ENCODE measurements at regions of chr10 and their contacts with region 1.

Region 1: DNA sequence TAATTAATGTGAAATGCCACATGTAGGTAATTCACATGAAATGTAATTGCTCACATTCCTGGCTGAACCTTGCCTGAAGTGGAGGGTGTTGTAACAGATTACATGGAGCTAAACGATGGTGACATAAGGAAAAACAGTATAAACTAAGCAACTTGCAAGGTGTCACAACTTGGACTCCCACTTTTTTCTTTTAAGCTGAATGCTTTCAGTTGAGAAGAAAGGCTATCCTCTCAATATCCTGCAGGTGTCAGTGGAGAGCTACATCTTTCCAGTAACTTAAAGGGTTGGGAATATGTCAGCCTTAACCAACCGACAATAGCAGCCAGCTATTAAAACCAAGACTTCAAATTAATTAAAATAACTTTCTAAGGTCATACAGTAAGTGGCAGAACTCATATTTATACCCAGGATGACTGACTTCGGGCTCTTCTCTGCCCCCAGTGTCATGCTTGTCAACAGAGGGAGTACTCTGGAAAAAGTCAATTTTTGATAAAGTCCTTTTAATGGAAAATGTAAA is 33.7 kb downstream of the NRBF2 start:
- DNase-seq: peak; percentile 24
- H3K4me3 ChIP-seq: no peak overlapping the region
- H3K27me3 ChIP-seq: no peaks in the 10 kb centered on the region
- CTCF ChIP-seq: peak; percentile 76

Region 2: GRCh38 chr10:63331586-63331985 is 164.8 kb after region 1 on chr10:
- CTCF ChIA-PET with region 1: no interaction called
- POLR2A ChIA-PET with region 1: no interaction called
- DNase-seq: no peak
- H3K4me3 ChIP-seq: no peak overlapping the region
- H3K27me3 ChIP-seq: no peaks in the 10 kb centered on the region
- CTCF ChIP-seq: no peak

Region 3: GRCh38 chr10:63629363-63630084 is 462.7 kb after region 1 on chr10:
- CTCF ChIA-PET with region 1: interaction called, 49 read pairs
- POLR2A ChIA-PET with region 1: interaction called, 3 read pairs
- DNase-seq: peak; percentile 96
- H3K4me3 ChIP-seq: peak overlapping the region; percentile 62
- H3K27me3 ChIP-seq: no peaks in the 10 kb centered on the region
- CTCF ChIP-seq: peak; percentile 86

Region 4: GRCh38 chr10:63767138-63767801 is 600.5 kb after region 1 on chr10:
- CTCF ChIA-PET with region 1: interaction called, 14 read pairs
- POLR2A ChIA-PET with region 1: no interaction called
- DNase-seq: peak; percentile 66
- H3K4me3 ChIP-seq: no peak overlapping the region
- H3K27me3 ChIP-seq: no peaks in the 10 kb centered on the region; the same call in none of the 2 replicates
- CTCF ChIP-seq: peak; percentile 29; the same call in 1 of the 2 replicates

Region 5: DNA sequence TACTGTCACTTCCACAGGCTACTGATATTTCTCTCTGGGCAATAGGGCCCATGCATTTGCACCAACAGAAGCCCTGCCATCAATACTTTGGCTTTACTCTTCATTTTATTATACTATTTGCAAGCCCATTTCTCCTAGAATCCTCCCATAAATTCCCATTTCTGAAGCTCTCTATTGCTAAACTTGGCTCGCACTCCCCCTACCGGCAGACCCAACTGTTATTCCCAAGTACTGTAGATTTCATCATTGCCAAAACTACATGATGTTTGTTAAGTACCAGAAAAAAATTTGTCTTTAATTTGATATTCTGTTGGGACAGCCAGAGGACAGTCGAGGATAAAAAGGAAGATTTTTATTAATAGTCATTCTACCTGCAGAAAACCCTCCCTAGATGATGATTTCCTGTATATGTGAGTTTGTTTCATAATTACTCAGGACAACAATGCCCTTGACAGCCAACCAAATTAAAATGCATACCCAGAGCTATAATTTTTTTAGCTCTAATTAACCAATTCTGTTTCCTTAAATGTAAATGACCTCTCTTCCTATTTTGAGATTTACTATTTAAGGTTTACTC is 653.0 kb after region 1 on chr10:
- CTCF ChIA-PET with region 1: interaction called, 24 read pairs
- POLR2A ChIA-PET with region 1: no interaction called
- DNase-seq: peak; percentile 18
- H3K4me3 ChIP-seq: no peak overlapping the region
- H3K27me3 ChIP-seq: no peaks in the 10 kb centered on the region
- CTCF ChIP-seq: peak; percentile 90

Measured in BJ (cell line).